ENCODE measurements at regions of chr6 and their contacts with region 1.

Region 1: DNA sequence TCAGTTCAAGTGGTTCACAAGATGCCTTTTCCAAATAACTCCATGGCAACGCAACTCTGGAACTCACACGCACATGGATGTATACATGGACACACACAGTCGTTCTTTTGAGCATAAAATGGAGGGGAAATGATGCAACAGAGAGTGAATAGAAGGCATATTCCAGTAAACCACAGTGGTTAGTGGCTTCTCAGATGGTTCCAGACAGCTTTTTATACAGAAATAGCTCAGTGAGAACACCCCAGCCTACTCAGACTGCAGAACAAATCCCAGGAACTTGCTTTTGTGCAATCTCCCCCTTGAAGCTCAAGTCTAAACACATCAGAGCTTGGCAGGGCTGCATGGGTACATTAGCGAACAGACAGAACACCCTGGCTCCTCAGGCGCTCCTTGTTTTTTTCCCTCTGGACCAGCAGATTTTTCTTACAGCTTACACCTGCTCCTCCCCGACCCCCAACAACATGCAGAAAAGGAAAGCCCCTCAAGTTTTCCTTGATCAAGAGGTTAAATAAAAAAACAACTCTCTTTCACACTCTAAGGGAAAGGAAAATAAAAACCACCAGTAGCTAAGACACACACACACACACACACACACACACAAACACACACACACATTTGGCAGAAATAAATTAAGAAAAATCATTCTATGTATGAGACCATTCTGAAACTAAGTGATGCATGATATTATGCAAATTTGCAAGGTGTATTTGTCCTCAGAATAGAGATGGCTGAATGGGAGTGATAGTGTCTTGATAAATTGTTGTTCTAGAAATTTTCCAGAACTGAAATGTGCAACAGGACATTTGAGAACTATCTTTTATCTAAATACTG is 51.2 kb upstream of the RANBP9 start:
- DNase-seq: no peak
- H3K4me3 Mint-ChIP-seq: peak overlapping the region; percentile 72
- H3K27ac Mint-ChIP-seq: peak overlapping the region; percentile 87
- H3K4me1 Mint-ChIP-seq: peaks cover 47% of the 10 kb centered on the region
- H3K27me3 Mint-ChIP-seq: no peaks in the 10 kb centered on the region

Region 2: DNA sequence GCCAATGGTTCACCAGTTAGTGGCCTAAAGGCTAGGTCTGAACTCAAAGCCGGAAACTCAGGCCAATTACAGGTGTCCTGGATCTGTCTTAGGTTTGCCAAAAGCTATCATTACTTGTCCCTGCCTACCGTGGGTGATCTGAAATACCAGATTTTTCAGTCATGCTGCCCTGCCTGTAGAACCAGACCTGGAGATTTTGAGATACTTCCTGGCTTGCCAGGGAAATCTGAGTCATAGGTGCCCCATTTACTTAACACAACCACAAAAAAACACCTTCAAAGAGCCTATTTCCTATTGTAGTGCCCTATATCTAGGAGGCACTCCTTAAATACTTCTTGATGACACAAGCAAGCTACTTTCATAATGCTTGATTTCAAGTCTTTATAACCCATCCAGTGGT is 37.3 kb before region 1 on chr6:
- intact Hi-C with region 1: loop called (anchors 2 kb)
- DNase-seq: no peak
- H3K4me3 Mint-ChIP-seq: peak overlapping the region; percentile 10
- H3K27ac Mint-ChIP-seq: no peak overlapping the region
- H3K4me1 Mint-ChIP-seq: peaks cover 22% of the 10 kb centered on the region
- H3K27me3 Mint-ChIP-seq: no peaks in the 10 kb centered on the region

Region 3: GRCh38 chr6:13787137-13787536 is 24.3 kb after region 1 on chr6:
- intact Hi-C with region 1: loop called (anchors 2 kb)
- DNase-seq: no peak
- H3K4me3 Mint-ChIP-seq: peak overlapping the region; percentile 26
- H3K27ac Mint-ChIP-seq: peak overlapping the region; percentile 81
- H3K4me1 Mint-ChIP-seq: peaks cover 34% of the 10 kb centered on the region
- H3K27me3 Mint-ChIP-seq: no peaks in the 10 kb centered on the region

Measured in activated T-helper 2 cell treated with anti-CD3 and anti-CD28 coated beads, Interferon-gamma antibody, Interleukin-2, Interleukin-4, amounts not matched to agents 10 μg/mL and 5 μg/mL and 100 μg/mL, durations not matched to agents 14 hours and 24 hours and 36 hours (primary cell).